HCT116 (cell line): ENCODE measurements at regions of chr1 and their contacts with region 1.

Region 1: GRCh38 chr1:108082738-108083481 is 117.2 kb downstream of the SLC25A24 start:
- DNase-seq: no peak
- ATAC-seq: no peak
- H3K4me3 ChIP-seq: no peak overlapping the region
- H3K27ac ChIP-seq: no peak overlapping the region
- H3K4me1 ChIP-seq: no peaks in the 10 kb centered on the region
- H3K27me3 ChIP-seq: peaks cover 72% of the 10 kb centered on the region
- CTCF ChIP-seq: no peak
- POLR2A ChIP-seq: no peak
- RAD21 ChIP-seq: no peak

Region 2: GRCh38 chr1:107688354-107688753 is 394.6 kb before region 1 on chr1:
- CTCF ChIA-PET with region 1: no interaction called
- POLR2A ChIA-PET with region 1: no interaction called
- RAD21 ChIA-PET with region 1: no interaction called
- intact Hi-C with region 1: no loop called
- DNase-seq: no peak
- ATAC-seq: no peak
- H3K4me3 ChIP-seq: no peak overlapping the region
- H3K27ac ChIP-seq: no peak overlapping the region
- H3K4me1 ChIP-seq: no peaks in the 10 kb centered on the region
- H3K27me3 ChIP-seq: no peaks in the 10 kb centered on the region
- CTCF ChIP-seq: no peak
- POLR2A ChIP-seq: no peak
- RAD21 ChIP-seq: no peak

Region 3: DNA sequence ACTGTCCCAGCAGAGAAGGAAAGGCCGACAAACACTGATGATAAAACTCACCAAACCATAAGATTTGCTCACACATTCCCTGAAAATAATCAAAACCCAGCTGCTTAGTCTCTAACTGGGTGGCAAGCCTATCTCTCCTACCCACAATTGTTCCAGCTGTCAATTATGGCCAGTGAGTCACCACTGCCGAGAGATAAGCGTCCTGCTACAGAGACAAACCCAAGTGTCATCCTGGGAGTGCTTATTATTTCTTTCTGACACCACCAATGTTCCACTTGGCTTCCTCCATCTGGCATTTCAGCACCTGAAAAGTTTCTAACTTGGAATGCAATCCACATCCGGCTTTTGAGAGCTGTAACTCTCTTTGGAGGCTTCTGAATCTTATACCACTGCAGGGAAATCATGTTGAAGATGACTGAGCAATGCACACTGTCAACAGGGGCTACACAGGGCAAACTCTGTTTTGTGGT is 66.4 kb before region 1 on chr1:
- CTCF ChIA-PET with region 1: no interaction called
- POLR2A ChIA-PET with region 1: no interaction called
- RAD21 ChIA-PET with region 1: no interaction called
- intact Hi-C with region 1: no loop called
- DNase-seq: no peak
- ATAC-seq: no peak
- H3K4me3 ChIP-seq: no peak overlapping the region
- H3K27ac ChIP-seq: no peak overlapping the region
- H3K4me1 ChIP-seq: no peaks in the 10 kb centered on the region
- H3K27me3 ChIP-seq: peaks cover 12% of the 10 kb centered on the region; the same call in 1 of the 2 replicates
- CTCF ChIP-seq: no peak
- POLR2A ChIP-seq: no peak
- RAD21 ChIP-seq: no peak

Region 4: DNA sequence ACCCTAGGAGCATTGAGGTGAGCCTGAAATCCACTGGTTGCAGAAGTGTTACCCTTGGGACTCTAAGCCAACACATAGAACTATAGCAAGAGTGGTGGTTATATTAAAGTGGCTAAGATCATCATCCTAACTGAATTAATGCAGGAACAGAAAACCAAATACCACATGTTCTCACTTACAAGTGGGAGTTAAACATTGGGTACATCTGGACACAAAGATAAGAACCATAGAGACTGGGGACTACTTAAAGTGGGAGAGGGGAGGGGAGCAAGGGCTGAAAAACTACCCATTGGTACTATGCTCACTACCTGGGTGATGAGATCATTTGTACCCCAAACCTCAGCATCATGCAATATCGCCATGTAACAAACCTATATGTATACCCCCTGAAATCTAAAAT is 17.2 kb after region 1 on chr1:
- CTCF ChIA-PET with region 1: no interaction called
- POLR2A ChIA-PET with region 1: no interaction called
- RAD21 ChIA-PET with region 1: no interaction called
- intact Hi-C with region 1: loop called (anchors 1 kb)
- DNase-seq: no peak
- ATAC-seq: no peak
- H3K4me3 ChIP-seq: no peak overlapping the region
- H3K27ac ChIP-seq: no peak overlapping the region
- H3K4me1 ChIP-seq: no peaks in the 10 kb centered on the region
- H3K27me3 ChIP-seq: peaks cover 35% of the 10 kb centered on the region; the same call in 1 of the 2 replicates
- CTCF ChIP-seq: no peak
- POLR2A ChIP-seq: no peak
- RAD21 ChIP-seq: no peak